ENCODE measurements at regions of chr1 and their contacts with region 1.

Region 1: DNA sequence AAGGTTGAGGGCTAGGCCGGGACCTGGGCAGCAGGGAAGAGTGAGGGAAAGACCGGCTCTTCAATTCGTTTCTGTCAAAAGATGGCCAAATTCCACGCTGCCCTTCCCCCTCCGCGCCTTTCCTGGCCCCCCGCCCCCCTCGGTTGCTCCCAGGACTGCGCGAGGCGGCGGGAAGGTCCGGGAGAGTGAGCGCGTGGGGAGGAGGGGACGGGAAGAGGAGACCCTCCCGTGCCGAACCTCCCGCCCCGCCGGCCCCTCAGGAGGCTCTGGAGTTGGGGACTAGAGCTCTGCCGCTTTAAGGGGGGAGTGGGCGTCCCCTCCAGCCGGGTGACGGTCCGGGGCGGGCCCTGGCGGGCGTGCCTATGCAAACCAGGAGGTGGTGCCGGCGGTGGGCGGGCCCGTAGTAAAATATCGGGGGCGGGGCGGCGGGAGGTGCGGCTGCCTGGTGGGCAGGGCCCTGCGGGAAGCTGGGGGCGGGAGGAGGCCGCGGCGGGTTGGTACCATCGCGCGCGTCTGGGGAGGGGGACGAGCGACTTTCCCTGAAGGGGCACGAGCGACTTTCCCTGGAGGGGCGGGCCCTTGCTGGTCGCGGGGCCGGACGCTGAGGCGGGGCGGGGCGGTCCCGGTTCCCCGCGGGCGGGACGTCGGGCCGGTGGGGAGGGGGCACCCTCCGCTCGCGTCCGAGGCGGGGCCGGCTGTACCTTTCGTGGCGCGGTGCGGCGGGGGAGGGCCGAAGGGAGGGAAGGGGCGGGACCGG is 58.2 kb downstream of the BCL9 start:
- DNase-seq: peak; percentile 97
- H3K4me3 Mint-ChIP-seq: peak overlapping the region; percentile 86
- H3K27ac Mint-ChIP-seq: peak overlapping the region; percentile 84
- H3K4me1 Mint-ChIP-seq: peaks cover 24% of the 10 kb centered on the region
- H3K27me3 Mint-ChIP-seq: no peaks in the 10 kb centered on the region

Region 2: GRCh38 chr1:147545133-147545532 is 54.4 kb before region 1 on chr1:
- CTCF ChIA-PET with region 1: interaction called, 5 read pairs
- intact Hi-C with region 1: loop called (anchors 1 kb)
- DNase-seq: peak; percentile 95
- H3K4me3 Mint-ChIP-seq: no peak overlapping the region
- H3K27ac Mint-ChIP-seq: peak overlapping the region; percentile 33
- H3K4me1 Mint-ChIP-seq: peaks cover 65% of the 10 kb centered on the region
- H3K27me3 Mint-ChIP-seq: no peaks in the 10 kb centered on the region

Region 3: DNA sequence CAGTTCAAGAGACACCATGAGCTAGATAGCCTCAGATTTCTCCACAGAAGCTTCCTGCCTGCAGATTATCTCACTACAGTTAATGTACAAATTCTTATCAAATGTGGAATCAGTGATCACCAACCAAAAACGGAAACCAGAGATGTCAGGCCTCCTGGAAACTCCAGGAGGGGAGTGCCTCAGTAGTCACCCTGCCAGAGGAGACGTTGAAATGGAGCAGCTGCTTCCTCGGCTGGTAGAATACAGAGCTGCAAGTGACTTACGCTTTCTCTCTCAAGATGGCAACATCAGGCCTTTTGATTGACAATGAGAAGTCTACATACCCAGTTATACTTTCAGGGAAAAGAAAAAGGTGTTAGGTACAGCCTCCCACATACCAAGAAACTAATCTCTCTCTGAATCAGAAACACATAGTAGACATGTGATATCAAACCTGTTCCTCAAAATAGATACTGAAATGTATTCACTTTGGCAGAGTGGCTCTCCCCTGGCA is 18.6 kb after region 1 on chr1:
- CTCF ChIA-PET with region 1: no interaction called
- intact Hi-C with region 1: loop called (anchors 1 kb)
- DNase-seq: peak; percentile 61
- H3K4me3 Mint-ChIP-seq: no peak overlapping the region
- H3K27ac Mint-ChIP-seq: peak overlapping the region; percentile 78
- H3K4me1 Mint-ChIP-seq: peaks cover 19% of the 10 kb centered on the region
- H3K27me3 Mint-ChIP-seq: no peaks in the 10 kb centered on the region

Region 4: GRCh38 chr1:147640553-147641165 is 41.1 kb after region 1 on chr1:
- CTCF ChIA-PET with region 1: interaction called, 3 read pairs
- intact Hi-C with region 1: loop called (anchors 5 kb)
- DNase-seq: peak; percentile 89
- H3K4me3 Mint-ChIP-seq: no peak overlapping the region
- H3K27ac Mint-ChIP-seq: no peak overlapping the region
- H3K4me1 Mint-ChIP-seq: peaks cover 11% of the 10 kb centered on the region
- H3K27me3 Mint-ChIP-seq: no peaks in the 10 kb centered on the region

Region 5: DNA sequence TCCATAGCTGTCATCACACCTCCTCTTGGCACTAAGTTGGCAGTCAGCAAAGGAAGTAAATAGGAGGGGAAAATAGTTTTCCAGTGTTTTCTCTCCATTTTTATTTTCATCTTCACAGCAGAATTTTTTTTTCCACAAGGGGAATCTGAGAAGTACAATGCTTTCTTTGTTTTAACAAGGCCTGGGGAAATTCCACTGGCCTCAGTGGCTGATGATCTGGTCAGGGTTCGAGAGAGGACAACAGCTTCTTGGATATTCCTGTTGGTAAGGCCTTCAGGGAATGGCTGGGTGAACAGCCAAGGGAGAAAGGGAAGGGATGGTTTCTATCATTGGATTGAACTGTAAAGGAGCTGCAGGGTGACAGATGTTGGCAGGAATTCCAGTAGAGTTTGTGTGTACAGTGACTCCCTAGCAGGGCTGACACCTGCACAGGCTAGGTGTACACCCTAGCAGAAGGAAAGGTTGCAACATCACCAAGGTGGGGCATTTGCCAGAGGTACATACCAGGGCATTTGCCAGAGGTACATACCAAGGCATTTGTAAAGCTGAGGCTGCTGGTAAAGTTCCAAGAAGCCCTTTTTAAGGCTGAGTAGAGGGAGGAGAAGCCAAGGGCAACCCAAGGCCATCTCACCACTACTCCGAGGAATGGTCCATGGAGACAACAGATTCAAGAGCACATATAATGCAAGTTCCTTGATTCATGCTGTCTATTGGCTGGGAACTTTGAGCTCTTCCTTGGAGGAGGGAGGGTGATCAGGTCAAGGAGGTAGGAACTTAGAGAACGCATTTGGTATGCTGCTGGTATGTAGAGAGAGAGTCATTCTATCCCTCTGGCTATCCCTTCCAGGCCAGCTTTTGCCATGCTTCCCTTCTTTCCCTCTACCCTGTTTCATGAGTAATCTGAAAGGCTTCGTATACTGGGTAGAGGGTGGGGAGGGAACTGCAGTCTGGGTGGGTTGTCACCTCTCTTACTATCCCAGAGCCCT is 157.8 kb after region 1 on chr1:
- CTCF ChIA-PET with region 1: no interaction called
- intact Hi-C with region 1: no loop called
- DNase-seq: no peak
- H3K4me3 Mint-ChIP-seq: no peak overlapping the region
- H3K27ac Mint-ChIP-seq: no peak overlapping the region
- H3K4me1 Mint-ChIP-seq: peaks cover 15% of the 10 kb centered on the region
- H3K27me3 Mint-ChIP-seq: no peaks in the 10 kb centered on the region